Naive thymus-derived CD4-positive, alpha-beta T cell (primary cell): ENCODE measurements at regions of chr2 and their contacts with region 1.

Region 1: GRCh38 chr2:96856776-96857673 is 791 bp downstream of the ANKRD39 start:
- DNase-seq: peak in 5 of 9 donors; percentile 27 to 39 (median 35)
- ATAC-seq: no peak
- H3K4me3 ChIP-seq: peak overlapping the region; percentile 72
- H3K4me3 Mint-ChIP-seq: peak overlapping the region; percentile 85 to 93 (median 89)
- H3K27ac ChIP-seq: peak overlapping the region; percentile 79
- H3K27ac Mint-ChIP-seq: peak overlapping the region; percentile 38 to 92 (median 84)
- H3K4me1 ChIP-seq: peaks cover 14 to 16% of the 10 kb centered on the region in 2 donors
- H3K4me1 Mint-ChIP-seq: peaks cover 21 to 57% (median 43%) of the 10 kb centered on the region in 7 donors
- H3K27me3 ChIP-seq: no peaks in the 10 kb centered on the region
- H3K27me3 Mint-ChIP-seq: no peaks in the 10 kb centered on the region

Region 2: GRCh38 chr2:96839293-96839874 is 17.6 kb before region 1 on chr2:
- CTCF ChIA-PET with region 1: interaction called, 3 read pairs
- POLR2A ChIA-PET with region 1: interaction called, 10 read pairs
- intact Hi-C with region 1: loop called in 1 of 2 experiments (anchors 1 kb)
- DNase-seq: peak; percentile 69 to 84 (median 80)
- ATAC-seq: peak; percentile 98
- H3K4me3 ChIP-seq: peak overlapping the region; percentile 56
- H3K4me3 Mint-ChIP-seq: peak overlapping the region; percentile 48 to 84 (median 73)
- H3K27ac ChIP-seq: peak overlapping the region; percentile 53
- H3K27ac Mint-ChIP-seq: peak overlapping the region; percentile 34 to 92 (median 83)
- H3K4me1 ChIP-seq: peaks cover 12 to 16% of the 10 kb centered on the region in 2 donors
- H3K4me1 Mint-ChIP-seq: peaks cover 0 to 30% (median 18%) of the 10 kb centered on the region in 7 donors
- H3K27me3 ChIP-seq: no peaks in the 10 kb centered on the region
- H3K27me3 Mint-ChIP-seq: no peaks in the 10 kb centered on the region

Region 3: DNA sequence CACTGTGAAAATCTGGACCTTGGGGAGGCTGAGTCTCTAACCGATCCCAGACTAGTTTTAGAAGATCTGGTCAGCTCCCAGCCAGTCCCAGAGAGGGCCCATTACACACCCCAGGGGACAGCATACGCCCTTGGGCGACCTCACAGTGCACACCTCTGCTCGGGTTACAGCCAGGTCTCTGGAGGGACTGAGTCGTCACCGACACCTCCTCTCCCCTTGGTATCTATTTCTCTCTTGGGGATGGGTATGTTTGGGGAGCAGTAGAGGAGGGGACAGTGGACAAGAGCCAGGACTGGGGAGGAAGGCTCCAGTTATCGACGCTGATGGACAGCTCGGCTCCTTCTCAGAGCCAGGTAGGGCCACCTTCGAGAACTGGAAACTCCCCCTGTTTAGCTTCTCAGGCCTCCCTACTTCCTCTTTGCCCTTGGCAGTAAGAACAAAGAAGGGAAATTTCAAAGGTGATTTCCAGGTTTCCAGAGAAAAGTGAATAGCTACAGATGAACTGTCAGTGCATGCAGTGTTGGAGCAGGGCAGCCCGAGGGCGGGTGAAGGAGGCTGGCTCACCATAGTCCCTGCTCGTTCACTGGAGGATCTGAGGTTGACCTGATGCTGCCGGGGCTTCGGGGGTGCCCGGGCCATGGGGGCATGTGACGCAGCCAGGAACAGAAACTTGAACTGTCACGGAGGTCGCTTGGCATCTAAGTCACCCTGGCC is 17.2 kb after region 1 on chr2:
- CTCF ChIA-PET with region 1: interaction called, 16 read pairs
- POLR2A ChIA-PET with region 1: interaction called, 69 read pairs
- intact Hi-C with region 1: loop called in 1 of 2 experiments (anchors 1 kb)
- DNase-seq: no peak
- ATAC-seq: peak; percentile 14
- H3K4me3 ChIP-seq: no peak overlapping the region
- H3K4me3 Mint-ChIP-seq: peak overlapping the region in 1 of 10 donors; percentile 22
- H3K27ac ChIP-seq: peak overlapping the region; percentile 9
- H3K27ac Mint-ChIP-seq: peak overlapping the region in 6 of 9 donors; percentile 18 to 91 (median 64)
- H3K4me1 ChIP-seq: peaks cover 7 to 20% of the 10 kb centered on the region in 2 donors
- H3K4me1 Mint-ChIP-seq: peaks cover 16 to 52% (median 39%) of the 10 kb centered on the region in 7 donors
- H3K27me3 ChIP-seq: no peaks in the 10 kb centered on the region
- H3K27me3 Mint-ChIP-seq: peaks cover 0 to 15% (median 0%) of the 10 kb centered on the region in 5 donors

Region 4: DNA sequence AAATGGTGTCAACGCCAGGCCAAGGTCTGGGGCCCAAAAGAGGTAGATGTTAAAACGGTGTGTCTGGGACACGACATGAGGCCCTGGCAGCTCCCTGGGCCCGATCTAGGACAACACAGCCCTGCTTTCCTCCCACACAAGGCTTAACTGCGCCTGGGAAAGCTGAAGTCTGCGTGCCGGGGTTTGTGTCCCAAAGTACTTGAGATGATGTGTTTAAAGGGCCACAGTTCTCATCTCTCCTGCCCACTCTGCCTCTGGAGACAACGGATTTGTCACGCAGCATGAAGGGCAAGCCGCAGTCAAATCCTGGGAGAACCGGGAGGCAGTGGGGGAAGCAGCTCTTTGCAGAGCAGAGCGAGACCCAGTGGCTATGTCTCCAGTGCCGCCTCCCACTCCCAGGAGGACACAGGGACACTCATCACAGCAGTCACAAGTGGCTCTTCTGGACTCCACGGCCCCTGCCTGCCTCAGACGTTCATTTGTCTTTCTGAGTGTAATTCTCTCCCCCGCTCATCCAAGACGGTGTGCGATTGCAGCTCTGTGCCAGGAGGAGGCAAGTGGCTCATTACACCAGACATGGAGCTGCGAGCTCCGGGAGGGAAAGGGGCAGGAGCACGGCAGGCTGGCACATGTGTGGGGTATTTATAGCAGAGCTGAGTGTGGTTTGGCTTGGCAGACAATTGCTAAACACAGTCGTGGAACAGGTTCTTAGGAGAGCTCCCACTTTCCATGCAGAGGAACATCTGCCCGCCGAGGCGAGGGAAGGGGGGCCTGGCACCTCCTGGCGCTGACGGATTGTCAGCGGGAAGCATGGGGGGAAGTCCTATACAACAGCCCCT is 70.6 kb after region 1 on chr2:
- CTCF ChIA-PET with region 1: interaction called, 6 read pairs
- POLR2A ChIA-PET with region 1: interaction called, 14 read pairs
- intact Hi-C with region 1: loop called in 1 of 2 experiments (anchors 1 kb)
- DNase-seq: no peak
- ATAC-seq: no peak
- H3K4me3 ChIP-seq: no peak overlapping the region
- H3K4me3 Mint-ChIP-seq: no peak overlapping the region
- H3K27ac ChIP-seq: no peak overlapping the region
- H3K27ac Mint-ChIP-seq: no peak overlapping the region
- H3K4me1 ChIP-seq: peaks cover 19 to 23% of the 10 kb centered on the region in 2 donors
- H3K4me1 Mint-ChIP-seq: peaks cover 16 to 44% (median 29%) of the 10 kb centered on the region in 7 donors
- H3K27me3 ChIP-seq: no peaks in the 10 kb centered on the region
- H3K27me3 Mint-ChIP-seq: peaks cover 0 to 26% (median 0%) of the 10 kb centered on the region in 5 donors

Region 5: GRCh38 chr2:97011977-97012565 is 155.0 kb after region 1 on chr2:
- CTCF ChIA-PET with region 1: interaction called, 3 read pairs
- POLR2A ChIA-PET with region 1: no interaction called
- intact Hi-C with region 1: loop called in 1 of 2 experiments (anchors 1 kb)
- DNase-seq: peak in 7 of 9 donors; percentile 25 to 67 (median 50)
- ATAC-seq: no peak
- H3K4me3 ChIP-seq: no peak overlapping the region
- H3K4me3 Mint-ChIP-seq: no peak overlapping the region
- H3K27ac ChIP-seq: no peak overlapping the region
- H3K27ac Mint-ChIP-seq: no peak overlapping the region
- H3K4me1 ChIP-seq: no peaks in the 10 kb centered on the region
- H3K4me1 Mint-ChIP-seq: peaks cover 0 to 8% (median 0%) of the 10 kb centered on the region in 7 donors
- H3K27me3 ChIP-seq: no peaks in the 10 kb centered on the region
- H3K27me3 Mint-ChIP-seq: peaks cover 0 to 59% (median 10%) of the 10 kb centered on the region in 5 donors